IMR-90 (cell line): ENCODE measurements at regions of chr16 and their contacts with region 1.

Region 1: DNA sequence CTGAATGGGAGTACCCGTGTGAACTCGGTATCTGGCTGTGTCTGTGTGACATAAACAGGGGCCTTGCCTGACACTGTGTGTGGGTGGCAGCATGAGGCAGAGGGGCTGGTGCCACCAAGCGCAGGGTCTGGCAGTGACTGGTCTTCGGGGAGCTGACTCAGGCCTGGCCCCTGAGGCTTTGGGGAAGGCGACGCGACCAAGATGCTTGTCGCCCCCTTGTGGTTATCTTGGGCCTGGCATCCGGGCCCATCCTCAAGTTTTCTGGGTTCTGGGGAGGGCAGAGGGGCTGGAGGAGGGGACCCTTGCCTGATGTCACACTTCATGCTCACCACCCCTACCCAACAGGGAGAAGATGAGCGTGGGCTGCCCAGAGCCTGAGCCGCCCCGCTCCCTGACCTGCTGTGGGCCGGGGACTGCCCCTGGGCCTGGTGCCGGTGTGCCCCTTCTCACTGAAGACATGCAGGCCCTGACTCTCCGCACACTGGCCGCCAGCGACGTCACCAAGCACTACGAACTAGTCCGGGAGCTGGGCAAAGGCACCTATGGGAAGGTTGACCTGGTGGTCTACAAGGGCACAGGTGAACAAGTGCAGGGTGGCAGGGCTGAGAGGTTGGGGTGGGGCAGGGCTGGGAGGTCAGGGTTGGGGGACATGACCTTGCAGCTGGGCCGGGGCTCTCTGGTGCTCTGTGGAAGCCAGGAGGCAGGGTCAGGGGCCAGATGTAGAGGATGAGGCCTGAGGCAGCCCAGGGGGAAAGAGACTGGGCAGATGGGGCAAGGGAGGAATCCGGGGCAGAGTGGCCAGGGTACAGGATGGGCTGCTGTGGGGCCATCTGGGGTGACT is 24.9 kb downstream of the SBK1 start:
- DNase-seq: peak; percentile 34
- ATAC-seq: peak; percentile 82
- H3K4me3 ChIP-seq: no peak overlapping the region
- H3K27ac ChIP-seq: no peak overlapping the region
- H3K4me1 ChIP-seq: no peaks in the 10 kb centered on the region
- H3K27me3 ChIP-seq: peaks cover 2% of the 10 kb centered on the region; the same call in 1 of the 2 replicates
- CTCF ChIP-seq: peak; percentile 81
- POLR2A ChIP-seq: no peak
- RAD21 ChIP-seq: peak; percentile 70

Region 2: DNA sequence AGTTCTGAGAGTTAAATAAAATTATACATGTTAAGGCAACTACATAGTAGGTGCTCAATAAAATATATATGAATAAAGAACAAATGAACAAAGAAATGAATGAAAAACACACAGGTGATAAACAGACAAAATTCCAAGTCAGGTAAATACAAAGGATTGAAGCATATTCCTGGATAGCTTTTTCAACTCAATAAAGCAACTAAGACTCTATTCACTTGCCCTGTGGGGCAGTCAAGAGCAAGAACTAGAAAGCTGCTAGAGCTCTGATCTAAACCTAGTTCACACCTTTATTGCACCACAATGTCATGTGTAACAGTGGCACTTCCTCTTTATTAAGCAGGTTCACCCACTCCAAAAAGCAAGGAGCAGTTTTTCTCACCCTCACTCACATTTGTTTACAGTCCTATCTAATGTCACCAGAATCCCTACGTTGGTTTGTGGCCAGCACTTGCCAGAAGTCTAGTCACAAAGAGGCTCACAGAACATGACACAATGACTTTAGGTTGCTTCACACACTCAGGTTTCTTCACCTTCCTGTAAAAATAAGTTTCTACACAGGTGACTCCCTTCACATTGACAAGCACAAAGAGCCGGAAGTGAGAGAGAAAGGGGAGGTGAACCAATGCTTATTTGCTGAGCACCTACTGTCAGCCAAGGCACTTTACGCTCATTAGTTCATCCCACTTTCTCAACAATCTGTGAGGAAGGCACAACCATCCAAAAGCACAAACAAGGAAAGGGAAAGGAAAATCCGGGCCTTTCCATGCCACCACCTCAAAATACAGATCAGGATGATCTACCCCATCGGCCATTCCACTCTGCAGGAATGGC is 176.3 kb before region 1 on chr16:
- CTCF ChIA-PET with region 1: no interaction called
- POLR2A ChIA-PET with region 1: no interaction called
- dilution Hi-C with region 1: no loop called
- in situ Hi-C with region 1: no loop called
- intact Hi-C with region 1: loop called (anchors 10 kb)
- DNase-seq: no peak
- ATAC-seq: no peak
- H3K4me3 ChIP-seq: no peak overlapping the region
- H3K27ac ChIP-seq: peak overlapping the region; percentile 5; the same call in 1 of the 2 replicates
- H3K4me1 ChIP-seq: peaks cover 4% of the 10 kb centered on the region
- H3K27me3 ChIP-seq: no peaks in the 10 kb centered on the region
- CTCF ChIP-seq: no peak
- POLR2A ChIP-seq: no peak
- RAD21 ChIP-seq: no peak

Region 3: DNA sequence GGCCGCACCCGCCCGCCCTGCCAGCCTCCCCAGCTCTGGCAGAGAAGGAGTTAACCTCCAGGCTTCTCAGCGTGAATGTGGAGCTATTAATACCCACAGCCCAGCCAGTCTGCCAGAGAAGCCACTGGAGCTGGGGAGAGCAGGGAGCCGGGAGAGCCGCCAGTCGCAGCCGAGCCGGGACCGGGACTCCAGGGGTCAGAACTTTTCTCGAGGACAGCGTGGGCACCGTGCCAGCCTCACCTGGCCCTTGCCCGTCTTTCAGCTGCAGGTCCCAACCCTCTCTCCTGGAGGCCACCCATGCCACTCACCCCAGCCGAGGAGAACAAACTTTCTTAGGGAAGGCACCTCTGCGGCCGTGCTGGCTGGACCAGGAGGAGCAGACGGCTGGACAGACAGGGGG is 58.7 kb before region 1 on chr16:
- CTCF ChIA-PET with region 1: no interaction called
- POLR2A ChIA-PET with region 1: no interaction called
- dilution Hi-C with region 1: no loop called
- in situ Hi-C with region 1: loop called (anchors 10 kb)
- intact Hi-C with region 1: no loop called
- DNase-seq: peak; percentile 4
- ATAC-seq: peak; percentile 84
- H3K4me3 ChIP-seq: no peak overlapping the region
- H3K27ac ChIP-seq: no peak overlapping the region
- H3K4me1 ChIP-seq: no peaks in the 10 kb centered on the region
- H3K27me3 ChIP-seq: peaks cover 60% of the 10 kb centered on the region
- CTCF ChIP-seq: no peak
- POLR2A ChIP-seq: no peak
- RAD21 ChIP-seq: no peak

Region 4: DNA sequence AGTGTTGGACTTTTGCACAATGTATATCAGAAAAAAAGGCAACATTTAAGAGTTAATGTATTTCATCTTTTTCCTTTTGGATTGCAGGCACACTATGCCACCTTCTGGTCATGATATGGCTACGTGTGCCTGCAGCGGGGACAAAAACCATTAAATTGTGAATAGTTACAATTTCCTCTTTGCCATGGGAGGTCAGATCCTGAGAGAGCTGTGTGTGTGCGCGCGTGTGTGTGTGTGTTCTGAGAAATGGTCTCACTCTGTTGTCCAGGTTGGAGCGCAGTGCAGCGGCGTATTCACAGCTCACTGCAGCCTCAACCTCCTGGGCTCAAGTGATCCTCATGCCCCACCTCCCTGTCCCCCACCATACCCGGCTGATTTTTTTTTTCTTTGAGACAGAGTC is 232.1 kb after region 1 on chr16:
- CTCF ChIA-PET with region 1: no interaction called
- POLR2A ChIA-PET with region 1: no interaction called
- dilution Hi-C with region 1: no loop called
- in situ Hi-C with region 1: loop called (anchors 10 kb)
- intact Hi-C with region 1: loop called (anchors 1 kb)
- DNase-seq: peak; percentile 53
- ATAC-seq: peak; percentile 15; the same call in 1 of the 2 replicates
- H3K4me3 ChIP-seq: no peak overlapping the region
- H3K27ac ChIP-seq: no peak overlapping the region
- H3K4me1 ChIP-seq: 0 out of 2 replicates have a peak, but pooled peaks cover under 1% of the 10 kb centered on the region
- H3K27me3 ChIP-seq: peaks cover 7% of the 10 kb centered on the region
- CTCF ChIP-seq: peak; percentile 72
- POLR2A ChIP-seq: no peak
- RAD21 ChIP-seq: peak; percentile 77